ENCODE measurements at regions of chr11 and their contacts with region 1.

Region 1: DNA sequence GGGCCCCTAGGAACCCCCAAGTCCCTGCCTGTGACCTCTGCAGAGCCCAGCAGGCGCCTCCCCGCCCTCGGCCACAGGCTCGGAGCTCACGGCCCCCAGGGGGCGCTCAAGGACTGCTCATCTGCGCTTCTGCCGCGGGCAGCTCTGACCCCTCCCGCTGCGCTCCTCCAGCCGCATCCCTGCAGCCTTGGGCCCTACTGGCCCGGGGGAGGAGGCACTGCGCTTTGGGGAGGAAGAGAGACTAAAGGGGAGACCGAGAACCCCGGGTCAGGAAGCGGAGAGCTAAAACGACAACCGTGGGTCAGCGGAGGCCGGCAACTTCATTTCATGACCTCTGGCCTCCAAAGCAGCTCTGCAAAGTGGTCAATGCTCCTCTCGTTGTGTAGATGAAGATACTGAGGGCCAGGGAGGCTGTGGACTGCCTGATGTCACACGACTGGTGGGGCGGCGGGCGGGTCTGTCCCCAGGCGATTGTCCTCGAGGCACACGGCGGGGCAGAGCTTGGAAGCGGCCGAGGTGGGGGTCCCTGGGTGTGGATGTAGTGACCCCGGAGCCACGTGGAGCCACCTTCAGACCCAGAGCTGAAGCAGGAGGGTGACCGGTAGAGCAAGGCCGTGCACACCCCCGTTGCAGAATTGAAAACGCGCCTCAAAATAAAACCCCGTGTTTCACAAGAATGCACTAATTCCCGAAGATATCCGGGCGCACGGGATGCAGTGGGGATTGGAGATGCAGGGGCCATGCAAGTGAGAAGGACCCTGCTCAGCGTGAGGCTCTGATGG is 2.7 kb upstream of the KRTAP5-6 start:
- DNase-seq: peak; percentile 90
- H3K4me3 ChIP-seq: peak overlapping the region; percentile 13 to 54 (median 28)
- H3K27ac ChIP-seq: peak overlapping the region in 3 of 4 donors; percentile 0 to 74 (median 48)
- H3K4me1 ChIP-seq: peaks cover 0 to 17% (median 11%) of the 10 kb centered on the region in 4 donors
- H3K27me3 ChIP-seq: peaks cover 0 to 7% (median 2%) of the 10 kb centered on the region in 3 donors
- CTCF ChIP-seq: peak; percentile 82 to 90 (median 86)
- EP300 ChIP-seq: no peak
- POLR2A ChIP-seq: no peak

Region 2: GRCh38 chr11:1652771-1653540 is 41.3 kb before region 1 on chr11:
- intact Hi-C with region 1: loop called (anchors 2 kb)
- DNase-seq: peak; percentile 84
- H3K4me3 ChIP-seq: no peak overlapping the region
- H3K27ac ChIP-seq: no peak overlapping the region
- H3K4me1 ChIP-seq: peaks cover 0 to 5% (median 4%) of the 10 kb centered on the region in 4 donors
- H3K27me3 ChIP-seq: peaks cover 0 to 23% (median 0%) of the 10 kb centered on the region in 3 donors
- CTCF ChIP-seq: peak; percentile 89 to 97 (median 94)
- EP300 ChIP-seq: no peak
- POLR2A ChIP-seq: no peak

Region 3: GRCh38 chr11:1832211-1832919 is 138.1 kb after region 1 on chr11:
- intact Hi-C with region 1: loop called (anchors 1 kb)
- DNase-seq: no peak
- H3K4me3 ChIP-seq: peak overlapping the region in 2 of 4 donors; percentile 4 to 20
- H3K27ac ChIP-seq: no peak overlapping the region
- H3K4me1 ChIP-seq: peaks cover 0 to 13% (median 11%) of the 10 kb centered on the region in 4 donors
- H3K27me3 ChIP-seq: peaks cover 0 to 3% (median 0%) of the 10 kb centered on the region in 3 donors
- CTCF ChIP-seq: peak; percentile 91 to 99 (median 98)
- EP300 ChIP-seq: no peak
- POLR2A ChIP-seq: no peak

Region 4: GRCh38 chr11:1882519-1883238 is 188.4 kb after region 1 on chr11:
- intact Hi-C with region 1: loop called (anchors 5 kb)
- DNase-seq: peak; percentile 91
- H3K4me3 ChIP-seq: no peak overlapping the region
- H3K27ac ChIP-seq: peak overlapping the region in 3 of 4 donors; percentile 65 to 78 (median 66)
- H3K4me1 ChIP-seq: peaks cover 0 to 31% (median 27%) of the 10 kb centered on the region in 4 donors
- H3K27me3 ChIP-seq: no peaks in the 10 kb centered on the region
- CTCF ChIP-seq: peak; percentile 65 to 86 (median 74)
- EP300 ChIP-seq: no peak
- POLR2A ChIP-seq: no peak